ENCODE measurements at regions of chr15 and their contacts with region 1.

Region 1: DNA sequence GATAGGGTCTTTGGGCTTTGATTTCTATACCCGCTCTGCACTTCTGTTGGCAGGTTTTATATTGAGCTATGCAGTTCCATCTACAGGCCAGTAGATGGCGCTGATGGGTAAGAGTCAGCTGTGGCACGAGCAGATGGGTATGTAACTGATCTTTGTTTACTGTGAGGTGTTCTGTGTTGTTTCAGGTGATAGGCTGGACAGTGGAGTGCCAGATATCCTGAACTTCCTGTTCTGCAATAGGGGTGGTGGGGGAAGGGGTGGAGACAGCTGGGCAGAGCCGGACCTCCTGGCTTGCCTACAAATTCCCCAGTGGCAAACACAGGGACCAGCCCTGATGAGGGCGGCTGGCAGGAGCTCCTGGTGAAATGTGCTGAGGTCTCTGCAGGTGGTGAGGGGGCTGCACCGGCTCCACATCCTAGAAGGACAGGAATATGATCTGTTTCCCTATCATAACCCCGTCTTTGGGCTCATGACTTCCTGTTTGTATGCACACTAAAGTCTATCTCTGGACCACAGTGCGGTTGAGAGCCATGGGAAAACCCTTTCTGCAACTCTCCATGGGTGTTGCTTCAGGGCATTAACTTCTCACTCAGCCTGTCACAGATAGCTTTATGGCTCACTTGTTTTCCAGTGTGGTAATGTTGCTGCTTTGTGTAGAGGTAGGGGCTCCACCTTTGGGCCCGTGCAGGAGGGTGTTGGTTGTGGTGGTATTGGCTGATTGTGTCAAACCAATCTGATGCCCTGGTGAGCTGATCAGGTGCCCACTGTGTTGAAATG is 13.4 kb upstream of the FAM98B start:
- DNase-seq: peak; percentile 73
- ATAC-seq: peak; percentile 82
- H3K4me3 Mint-ChIP-seq: no peak overlapping the region
- H3K27ac Mint-ChIP-seq: no peak overlapping the region
- H3K4me1 Mint-ChIP-seq: peaks cover 11% of the 10 kb centered on the region
- H3K27me3 Mint-ChIP-seq: peaks cover 34% of the 10 kb centered on the region

Region 2: GRCh38 chr15:38424101-38424552 is 16.4 kb before region 1 on chr15:
- CTCF ChIA-PET with region 1: interaction called, 14 read pairs
- POLR2A ChIA-PET with region 1: no interaction called
- DNase-seq: no peak
- ATAC-seq: no peak
- H3K4me3 Mint-ChIP-seq: no peak overlapping the region
- H3K27ac Mint-ChIP-seq: no peak overlapping the region
- H3K4me1 Mint-ChIP-seq: no peaks in the 10 kb centered on the region
- H3K27me3 Mint-ChIP-seq: peaks cover 28% of the 10 kb centered on the region

Region 3: DNA sequence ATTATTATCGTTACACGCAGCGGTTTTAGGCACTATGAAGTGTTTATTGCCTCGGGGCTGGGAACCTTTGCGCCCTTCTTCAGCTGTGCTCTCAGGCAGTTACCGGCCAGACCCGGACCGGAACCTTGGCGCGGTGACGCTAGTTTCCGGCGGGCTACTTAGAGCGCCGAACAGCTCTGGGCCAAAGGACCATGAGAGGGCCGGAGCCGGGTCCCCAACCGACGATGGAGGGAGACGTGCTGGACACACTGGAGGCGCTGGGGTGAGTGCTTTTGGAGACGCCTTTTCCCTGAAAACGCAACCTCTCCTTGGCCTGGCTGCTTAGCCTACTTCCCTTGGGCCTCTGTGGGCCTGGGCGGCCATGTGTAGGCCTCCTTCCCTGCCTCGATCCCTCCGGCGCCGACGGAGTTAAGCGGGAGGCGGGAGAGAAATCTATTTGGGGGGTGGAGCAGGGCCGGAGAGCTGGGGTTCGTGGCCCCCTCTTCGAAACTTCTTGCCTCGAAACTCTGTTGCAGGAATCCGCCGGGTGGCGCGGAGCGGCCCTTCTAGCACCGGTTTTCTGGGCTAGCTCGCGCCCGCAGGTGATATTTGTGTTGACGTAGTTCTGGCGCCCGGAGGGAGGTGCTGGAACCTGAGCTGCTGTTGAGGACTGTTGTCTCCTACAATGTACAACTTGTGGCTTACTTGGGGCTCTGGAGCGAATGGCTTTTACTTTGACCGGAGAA is 13.6 kb after region 1 on chr15 and contains the start of gene FAM98B:
- CTCF ChIA-PET with region 1: interaction called, 87 read pairs
- POLR2A ChIA-PET with region 1: interaction called, 15 read pairs
- DNase-seq: peak; percentile 89
- ATAC-seq: peak; percentile 92
- H3K4me3 Mint-ChIP-seq: peak within 1 kb of the TSS; percentile 96
- H3K27ac Mint-ChIP-seq: peak within 1 kb of the TSS; percentile 92
- H3K4me1 Mint-ChIP-seq: peaks cover 29% of the 10 kb centered on the region
- H3K27me3 Mint-ChIP-seq: peaks cover 9% of the 10 kb centered on the region
- total RNA-seq, gene FAM98B: 42.8 to 43.9 TPM

Region 4: GRCh38 chr15:38461066-38461833 is 20.7 kb after region 1 on chr15:
- CTCF ChIA-PET with region 1: interaction called, 35 read pairs
- POLR2A ChIA-PET with region 1: no interaction called
- DNase-seq: no peak
- ATAC-seq: no peak
- H3K4me3 Mint-ChIP-seq: no peak overlapping the region
- H3K27ac Mint-ChIP-seq: no peak overlapping the region
- H3K4me1 Mint-ChIP-seq: peaks cover 26% of the 10 kb centered on the region
- H3K27me3 Mint-ChIP-seq: no peaks in the 10 kb centered on the region

Region 5: DNA sequence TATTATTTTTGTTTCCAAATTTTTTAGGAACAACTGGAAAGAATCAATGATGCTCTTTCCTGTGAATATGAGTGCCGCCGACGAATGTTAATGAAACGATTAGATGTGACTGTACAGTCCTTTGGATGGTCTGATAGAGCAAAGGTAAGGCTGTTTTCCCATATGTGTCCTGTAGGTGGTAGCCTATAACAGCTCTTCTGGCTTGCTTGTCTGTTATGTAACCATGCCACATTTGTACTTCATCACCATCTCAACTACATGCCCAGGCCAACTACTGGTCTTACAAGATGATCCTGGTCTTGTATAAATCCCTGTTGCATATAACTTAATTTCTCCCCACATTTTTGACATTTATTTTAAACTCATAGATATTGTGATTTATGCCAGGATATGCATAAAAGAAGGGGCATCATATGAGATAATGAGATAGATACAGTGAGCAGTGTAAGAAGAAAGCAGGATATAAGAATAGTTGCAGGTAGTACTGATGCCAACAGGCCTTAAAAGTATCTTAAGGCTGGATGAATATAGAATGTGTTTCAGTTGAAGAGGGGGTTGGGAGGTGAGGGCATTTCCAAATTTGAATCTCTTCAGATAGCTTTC is 33.7 kb after region 1 on chr15:
- CTCF ChIA-PET with region 1: interaction called, 32 read pairs
- POLR2A ChIA-PET with region 1: no interaction called
- DNase-seq: peak; percentile 58
- ATAC-seq: peak; percentile 95
- H3K4me3 Mint-ChIP-seq: no peak overlapping the region
- H3K27ac Mint-ChIP-seq: peak overlapping the region; percentile 7
- H3K4me1 Mint-ChIP-seq: peaks cover 2% of the 10 kb centered on the region
- H3K27me3 Mint-ChIP-seq: no peaks in the 10 kb centered on the region

Region 6: GRCh38 chr15:38490242-38490922 is 49.8 kb after region 1 on chr15:
- CTCF ChIA-PET with region 1: interaction called, 17 read pairs
- POLR2A ChIA-PET with region 1: no interaction called
- DNase-seq: no peak
- ATAC-seq: no peak
- H3K4me3 Mint-ChIP-seq: no peak overlapping the region
- H3K27ac Mint-ChIP-seq: peak overlapping the region; percentile 31
- H3K4me1 Mint-ChIP-seq: peaks cover 26% of the 10 kb centered on the region
- H3K27me3 Mint-ChIP-seq: no peaks in the 10 kb centered on the region

Region 7: DNA sequence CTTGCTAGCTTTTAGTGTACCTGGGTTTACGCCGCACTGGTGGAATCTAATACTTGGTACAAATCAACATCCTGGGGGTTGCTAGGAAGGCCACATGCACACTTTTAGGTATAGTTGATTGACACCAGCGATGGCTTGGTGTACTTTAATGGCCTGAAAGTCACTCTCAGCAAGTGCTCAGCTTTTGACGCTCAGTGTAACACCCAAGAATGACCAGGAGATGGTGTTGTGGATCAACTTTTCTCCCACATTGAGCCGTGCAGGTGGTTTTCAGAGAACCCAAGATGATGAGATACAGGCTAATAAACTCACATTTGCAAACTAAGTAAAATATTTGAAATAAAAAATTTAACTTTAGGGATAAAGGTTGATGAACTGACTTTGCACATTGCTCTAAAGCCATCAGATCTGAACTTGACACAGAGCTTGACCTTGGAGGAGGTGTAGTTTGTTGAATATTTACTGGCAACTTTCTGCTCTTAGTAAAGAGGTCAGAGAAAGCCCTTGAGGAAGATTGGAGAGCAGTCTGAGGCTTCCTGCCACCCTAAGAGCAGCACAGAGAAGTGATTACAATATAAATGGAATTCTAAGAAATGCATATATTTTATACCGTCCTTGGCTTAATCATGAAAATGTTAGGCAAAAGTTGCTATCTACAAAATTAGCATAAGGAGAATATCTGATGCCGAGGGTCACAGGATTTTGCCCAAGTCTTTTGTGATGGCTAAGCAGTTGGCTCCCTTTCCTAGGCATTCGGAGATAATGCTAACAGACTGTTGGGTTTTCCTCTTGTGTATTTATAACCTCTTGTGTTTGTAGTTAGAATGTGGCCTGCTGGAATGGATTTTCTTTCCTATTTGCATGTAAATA is 267.5 kb after region 1 on chr15:
- CTCF ChIA-PET with region 1: interaction called, 56 read pairs
- POLR2A ChIA-PET with region 1: no interaction called
- DNase-seq: peak; percentile 60
- ATAC-seq: peak; percentile 77
- H3K4me3 Mint-ChIP-seq: no peak overlapping the region
- H3K27ac Mint-ChIP-seq: no peak overlapping the region
- H3K4me1 Mint-ChIP-seq: peaks cover 7% of the 10 kb centered on the region
- H3K27me3 Mint-ChIP-seq: peaks cover 15% of the 10 kb centered on the region

Measured in activated CD8-positive, alpha-beta T cell treated with anti-CD3 and anti-CD28 coated beads, Interleukin-2, amount 10 ng/mL, durations not matched to agents 7 days and 5 days (primary cell).